Activated CD8-positive, alpha-beta memory T cell treated with anti-CD3 and anti-CD28 coated beads, Interleukin-2, amount 10 ng/mL, durations not matched to agents 7 days and 5 days (primary cell): ENCODE measurements at regions of chr19 and their contacts with region 1.

Region 1: GRCh38 chr19:40640744-40641143 is 39.6 kb downstream of the LTBP4 start:
- DNase-seq: no peak
- ATAC-seq: no peak
- H3K4me3 Mint-ChIP-seq: no peak overlapping the region
- H3K27ac Mint-ChIP-seq: no peak overlapping the region
- H3K4me1 Mint-ChIP-seq: peaks cover 4% of the 10 kb centered on the region
- H3K27me3 Mint-ChIP-seq: peaks cover 2% of the 10 kb centered on the region

Region 2: GRCh38 chr19:40285353-40286234 is 355.1 kb before region 1 on chr19:
- CTCF ChIA-PET with region 1: interaction called, 10 read pairs
- DNase-seq: peak; percentile 99
- ATAC-seq: peak; percentile 92
- H3K4me3 Mint-ChIP-seq: peak overlapping the region; percentile 86
- H3K27ac Mint-ChIP-seq: peak overlapping the region; percentile 99
- H3K4me1 Mint-ChIP-seq: peaks cover 43% of the 10 kb centered on the region
- H3K27me3 Mint-ChIP-seq: no peaks in the 10 kb centered on the region

Region 3: GRCh38 chr19:40570313-40571004 is 70.3 kb before region 1 on chr19:
- CTCF ChIA-PET with region 1: interaction called, 17 read pairs
- DNase-seq: peak; percentile 99
- ATAC-seq: peak; percentile 93
- H3K4me3 Mint-ChIP-seq: peak overlapping the region; percentile 56
- H3K27ac Mint-ChIP-seq: peak overlapping the region; percentile 81
- H3K4me1 Mint-ChIP-seq: peaks cover 16% of the 10 kb centered on the region
- H3K27me3 Mint-ChIP-seq: peaks cover 33% of the 10 kb centered on the region

Region 4: GRCh38 chr19:40613640-40614303 is 27.0 kb before region 1 on chr19:
- CTCF ChIA-PET with region 1: interaction called, 88 read pairs
- DNase-seq: peak; percentile 93
- ATAC-seq: peak; percentile 70
- H3K4me3 Mint-ChIP-seq: peak overlapping the region; percentile 91
- H3K27ac Mint-ChIP-seq: peak overlapping the region; percentile 96
- H3K4me1 Mint-ChIP-seq: peaks cover 44% of the 10 kb centered on the region
- H3K27me3 Mint-ChIP-seq: no peaks in the 10 kb centered on the region

Region 5: DNA sequence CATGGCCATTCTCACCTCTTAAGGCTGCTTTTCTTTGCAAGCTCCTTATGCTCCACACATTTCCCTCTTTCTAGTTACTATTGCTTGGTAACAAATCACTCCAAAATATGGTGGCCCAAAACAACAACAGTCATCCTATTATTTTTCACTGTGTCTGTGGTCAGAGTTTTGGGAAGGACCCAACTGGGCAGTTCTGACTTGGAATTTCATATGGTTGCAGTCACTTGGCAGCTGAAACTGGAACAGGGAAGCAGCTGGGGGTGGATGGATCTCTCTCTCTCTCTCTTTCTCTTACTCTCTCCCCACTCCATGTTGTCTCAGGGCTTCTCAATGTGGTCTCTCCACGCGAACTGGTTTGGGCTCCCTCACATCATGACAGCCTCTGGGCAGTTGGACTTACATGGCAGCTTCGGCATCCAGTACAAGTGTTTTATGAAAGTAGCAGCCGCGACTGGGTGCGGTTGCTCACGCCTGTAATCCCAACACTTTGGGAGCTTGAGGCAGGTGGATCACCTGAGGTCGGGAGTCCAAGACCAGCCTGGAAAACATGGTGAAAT is 10.1 kb after region 1 on chr19:
- CTCF ChIA-PET with region 1: interaction called, 52 read pairs
- DNase-seq: no peak
- ATAC-seq: no peak
- H3K4me3 Mint-ChIP-seq: no peak overlapping the region
- H3K27ac Mint-ChIP-seq: no peak overlapping the region
- H3K4me1 Mint-ChIP-seq: peaks cover 3% of the 10 kb centered on the region
- H3K27me3 Mint-ChIP-seq: peaks cover 4% of the 10 kb centered on the region

Region 6: DNA sequence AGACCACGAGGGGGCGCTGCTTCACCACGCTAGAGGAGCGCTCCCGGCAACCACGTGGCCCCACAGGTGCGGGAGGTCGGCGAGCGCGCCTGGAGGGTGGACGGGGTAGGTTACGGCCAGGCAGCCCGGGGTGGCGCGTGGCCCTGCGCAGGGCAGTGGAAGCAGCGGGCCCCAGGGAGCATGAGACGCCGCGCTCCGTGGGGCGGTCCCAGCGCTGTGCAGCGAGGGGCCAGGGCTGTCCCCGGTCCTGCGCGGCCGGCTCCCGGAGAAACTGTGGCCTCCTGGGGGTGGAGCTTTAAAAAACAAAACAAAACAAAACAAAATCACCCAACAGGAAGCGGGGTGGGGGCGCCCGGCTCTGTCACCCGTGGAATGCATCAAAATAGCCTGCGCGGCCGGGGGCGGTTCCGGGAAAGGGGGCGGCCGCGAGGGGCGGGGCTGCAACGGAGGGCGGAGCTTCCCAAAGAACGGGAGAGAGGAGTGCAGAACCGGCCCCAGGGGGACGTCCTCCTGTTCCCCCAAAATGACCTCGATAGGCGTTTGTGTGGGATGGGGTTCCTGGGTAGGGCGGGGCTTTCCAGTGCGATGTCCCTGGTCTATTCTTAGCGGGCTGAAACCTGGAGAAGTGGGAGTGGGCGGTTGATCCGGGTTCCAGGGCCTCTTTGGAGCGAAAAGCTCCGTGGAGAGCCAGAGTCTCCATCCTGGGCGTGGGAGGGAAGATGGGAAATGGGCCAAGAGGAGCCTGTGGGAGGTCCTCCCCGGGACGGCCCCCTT is 22.4 kb after region 1 on chr19:
- CTCF ChIA-PET with region 1: interaction called, 31 read pairs
- DNase-seq: peak; percentile 92
- ATAC-seq: peak; percentile 92
- H3K4me3 Mint-ChIP-seq: peak overlapping the region; percentile 72
- H3K27ac Mint-ChIP-seq: peak overlapping the region; percentile 56
- H3K4me1 Mint-ChIP-seq: peaks cover 22% of the 10 kb centered on the region
- H3K27me3 Mint-ChIP-seq: no peaks in the 10 kb centered on the region